HEK293T (cell line): ENCODE measurements at regions of chr5 and their contacts with region 1.

Region 1: DNA sequence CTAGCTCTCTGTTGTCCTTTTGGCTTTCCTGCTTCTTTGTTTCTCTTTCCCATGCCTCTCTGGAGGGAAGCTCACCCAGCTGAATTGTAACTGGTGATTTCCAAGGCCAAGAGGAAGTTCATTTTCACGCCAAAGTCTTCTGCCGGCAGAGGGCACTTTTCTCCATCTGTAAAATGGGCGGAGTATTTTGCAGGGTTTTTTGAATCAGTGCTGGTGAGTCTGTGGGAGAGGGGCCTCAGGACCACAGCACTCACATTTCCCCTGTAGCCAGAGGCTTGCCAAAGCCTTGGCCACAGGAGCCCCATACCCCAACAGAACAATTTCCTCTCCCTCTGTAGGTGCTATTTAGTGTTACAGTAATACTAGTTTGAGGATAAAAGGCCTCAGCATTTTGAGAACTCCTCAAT is 42.3 kb upstream of the MATR3 start:
- DNase-seq: no peak

Region 2: GRCh38 chr5:138874241-138874640 is 377.0 kb before region 1 on chr5:
- CTCF ChIA-PET with region 1: interaction called, 11 read pairs
- POLR2A ChIA-PET with region 1: no interaction called
- DNase-seq: no peak

Region 3: DNA sequence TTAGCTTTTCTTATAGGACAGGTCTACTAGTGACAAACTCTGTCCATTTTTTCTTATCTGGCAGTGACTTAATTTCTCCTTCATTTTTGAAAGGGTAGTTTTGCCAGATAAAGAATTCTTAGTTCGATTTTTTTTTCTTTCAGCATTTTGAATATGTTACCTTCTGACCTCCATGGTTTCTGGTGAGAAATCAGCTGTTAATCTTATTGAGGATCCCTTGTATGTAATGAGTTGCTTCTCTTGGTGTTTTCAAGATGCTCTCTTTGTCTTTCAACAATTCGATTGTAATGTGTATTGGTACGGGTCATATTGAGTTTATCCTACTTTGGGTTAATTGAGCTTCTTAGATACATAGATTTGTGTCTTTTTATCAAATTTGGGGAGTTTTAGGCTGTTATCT is 102.9 kb after region 1 on chr5:
- CTCF ChIA-PET with region 1: no interaction called
- POLR2A ChIA-PET with region 1: no interaction called
- DNase-seq: no peak